ENCODE measurements at regions of chr6 and their contacts with region 1.

Region 1: GRCh38 chr6:82875573-82876185 is 190.0 kb downstream of the UBE3D start:
- DNase-seq: peak; percentile 96
- ATAC-seq: peak; percentile 78
- H3K4me3 ChIP-seq: no peak overlapping the region
- H3K27ac ChIP-seq: peak overlapping the region; percentile 73
- H3K4me1 ChIP-seq: peaks cover 60% of the 10 kb centered on the region
- H3K27me3 ChIP-seq: no peaks in the 10 kb centered on the region
- CTCF ChIP-seq: no peak

Region 2: GRCh38 chr6:82247634-82248232 is 627.9 kb before region 1 on chr6 and contains the start of gene IBTK:
- CTCF ChIA-PET with region 1: no interaction called
- POLR2A ChIA-PET with region 1: interaction called, 3 read pairs
- intact Hi-C with region 1: loop called (anchors 5 kb)
- DNase-seq: peak; percentile 88
- ATAC-seq: peak; percentile 70
- H3K4me3 ChIP-seq: peak within 1 kb of the TSS; percentile 84
- H3K27ac ChIP-seq: peak within 1 kb of the TSS; percentile 100
- H3K4me1 ChIP-seq: peaks cover 38% of the 10 kb centered on the region
- H3K27me3 ChIP-seq: no peaks in the 10 kb centered on the region
- CTCF ChIP-seq: no peak
- total RNA-seq, gene IBTK: 17.2 and 20.0 TPM in 2 replicates

Region 3: GRCh38 chr6:82396964-82397751 is 478.5 kb before region 1 on chr6:
- CTCF ChIA-PET with region 1: no interaction called
- POLR2A ChIA-PET with region 1: no interaction called
- intact Hi-C with region 1: loop called (anchors 5 kb)
- DNase-seq: peak; percentile 93
- ATAC-seq: peak; percentile 81
- H3K4me3 ChIP-seq: peak overlapping the region; percentile 56
- H3K27ac ChIP-seq: peak overlapping the region; percentile 99
- H3K4me1 ChIP-seq: peaks cover 33% of the 10 kb centered on the region
- H3K27me3 ChIP-seq: no peaks in the 10 kb centered on the region
- CTCF ChIP-seq: no peak

Region 4: GRCh38 chr6:82646214-82646580 is 229.5 kb before region 1 on chr6:
- CTCF ChIA-PET with region 1: no interaction called
- POLR2A ChIA-PET with region 1: no interaction called
- intact Hi-C with region 1: loop called (anchors 10 kb)
- DNase-seq: peak; percentile 78
- ATAC-seq: peak; percentile 92
- H3K4me3 ChIP-seq: 0 out of 2 replicates have a peak overlapping the region, but pooled peaks have one; percentile 5
- H3K27ac ChIP-seq: peak overlapping the region; percentile 93
- H3K4me1 ChIP-seq: peaks cover 25% of the 10 kb centered on the region
- H3K27me3 ChIP-seq: no peaks in the 10 kb centered on the region
- CTCF ChIP-seq: no peak

Region 5: GRCh38 chr6:82681119-82681714 is 194.5 kb before region 1 on chr6:
- CTCF ChIA-PET with region 1: no interaction called
- POLR2A ChIA-PET with region 1: no interaction called
- intact Hi-C with region 1: loop called (anchors 2 kb)
- DNase-seq: peak; percentile 71
- ATAC-seq: peak; percentile 75
- H3K4me3 ChIP-seq: peak overlapping the region; percentile 35; the same call in 1 of the 2 replicates
- H3K27ac ChIP-seq: peak overlapping the region; percentile 97
- H3K4me1 ChIP-seq: peaks cover 29% of the 10 kb centered on the region
- H3K27me3 ChIP-seq: no peaks in the 10 kb centered on the region
- CTCF ChIP-seq: no peak

Region 6: GRCh38 chr6:82917346-82918064 is 41.8 kb after region 1 on chr6:
- CTCF ChIA-PET with region 1: no interaction called
- POLR2A ChIA-PET with region 1: no interaction called
- intact Hi-C with region 1: no loop called
- DNase-seq: peak; percentile 16
- ATAC-seq: no peak
- H3K4me3 ChIP-seq: no peak overlapping the region
- H3K27ac ChIP-seq: no peak overlapping the region
- H3K4me1 ChIP-seq: no peaks in the 10 kb centered on the region
- H3K27me3 ChIP-seq: no peaks in the 10 kb centered on the region
- CTCF ChIP-seq: no peak

Region 7: GRCh38 chr6:82976179-82976578 is 100.5 kb after region 1 on chr6:
- CTCF ChIA-PET with region 1: no interaction called
- POLR2A ChIA-PET with region 1: no interaction called
- intact Hi-C with region 1: loop called (anchors 2 kb)
- DNase-seq: no peak
- ATAC-seq: no peak
- H3K4me3 ChIP-seq: no peak overlapping the region
- H3K27ac ChIP-seq: no peak overlapping the region
- H3K4me1 ChIP-seq: peaks cover 35% of the 10 kb centered on the region
- H3K27me3 ChIP-seq: no peaks in the 10 kb centered on the region
- CTCF ChIP-seq: no peak

Measured in PC-3 (cell line).